ENCODE measurements at regions of chr13 and their contacts with region 1.

Region 1: DNA sequence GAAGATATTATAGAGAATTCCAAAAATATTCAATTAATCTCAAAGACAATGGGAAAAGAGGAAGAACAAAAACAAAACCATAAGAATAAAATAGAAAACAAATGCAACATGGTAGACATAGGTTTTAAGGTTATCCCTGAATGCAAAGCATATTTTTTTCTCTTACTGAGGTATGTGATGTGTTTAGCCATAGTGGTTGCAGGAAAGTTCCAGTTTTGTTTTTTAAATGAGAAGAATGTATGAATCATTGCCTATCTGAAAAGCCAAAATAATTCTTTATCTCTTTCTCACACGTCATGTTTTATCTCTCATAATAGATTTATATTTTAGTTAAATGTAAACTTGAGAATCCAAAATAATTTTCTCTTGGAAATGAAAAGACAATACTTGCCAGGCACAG is 2591.7 kb upstream of the PCDH20 start:
- DNase-seq: no peak
- ATAC-seq: no peak
- H3K4me3 ChIP-seq: no peak overlapping the region
- H3K27ac ChIP-seq: no peak overlapping the region
- H3K4me1 ChIP-seq: no peaks in the 10 kb centered on the region
- H3K27me3 ChIP-seq: no peaks in the 10 kb centered on the region
- CTCF ChIP-seq: no peak

Region 2: DNA sequence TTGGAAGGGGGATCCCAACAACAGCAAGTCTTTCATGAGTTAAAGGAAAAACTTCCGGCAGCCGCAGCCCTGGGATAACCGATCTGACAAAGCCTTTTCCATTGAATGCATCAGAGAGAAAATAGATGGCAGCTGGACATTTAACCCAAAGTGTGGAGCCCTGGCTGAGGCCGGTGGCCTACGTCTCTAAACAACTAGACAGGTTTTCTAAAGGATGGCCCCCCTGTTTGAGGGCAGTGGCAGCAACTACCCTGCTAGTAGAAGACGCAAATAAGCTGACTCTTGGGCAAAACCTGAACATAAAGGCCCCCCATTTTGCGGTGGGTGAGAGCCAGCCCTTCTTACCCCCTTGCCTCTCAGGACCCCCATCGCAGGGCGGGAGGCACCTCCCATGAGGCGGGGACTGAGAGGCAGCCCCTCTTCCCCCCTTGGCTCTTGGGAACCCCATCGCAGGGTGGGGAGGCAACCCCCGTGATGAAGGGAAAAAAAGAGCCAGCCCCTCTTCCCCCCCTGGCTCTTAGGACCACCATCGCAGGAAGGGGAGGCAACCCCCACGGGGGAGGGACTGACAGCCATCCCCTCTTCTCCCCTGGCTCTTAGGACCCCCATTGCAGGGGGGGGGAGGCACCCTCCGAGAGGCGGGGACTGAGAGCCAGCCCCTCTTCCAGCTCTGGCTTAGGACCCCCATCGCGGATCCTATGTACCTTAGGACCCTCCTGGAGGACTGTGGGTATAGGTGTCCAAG is 168.8 kb before region 1 on chr13:
- CTCF ChIA-PET with region 1: no interaction called
- POLR2A ChIA-PET with region 1: no interaction called
- in situ Hi-C with region 1: no loop called
- intact Hi-C with region 1: no loop called
- DNase-seq: no peak
- ATAC-seq: no peak
- H3K4me3 ChIP-seq: no peak overlapping the region
- H3K27ac ChIP-seq: no peak overlapping the region
- H3K4me1 ChIP-seq: no peaks in the 10 kb centered on the region
- H3K27me3 ChIP-seq: no peaks in the 10 kb centered on the region
- CTCF ChIP-seq: no peak

Region 3: GRCh38 chr13:63972328-63972727 is 35.0 kb before region 1 on chr13:
- CTCF ChIA-PET with region 1: interaction called, 12 read pairs
- POLR2A ChIA-PET with region 1: no interaction called
- in situ Hi-C with region 1: no loop called
- intact Hi-C with region 1: no loop called
- DNase-seq: no peak
- ATAC-seq: no peak
- H3K4me3 ChIP-seq: no peak overlapping the region
- H3K27ac ChIP-seq: no peak overlapping the region
- H3K4me1 ChIP-seq: no peaks in the 10 kb centered on the region
- H3K27me3 ChIP-seq: no peaks in the 10 kb centered on the region
- CTCF ChIP-seq: no peak

Region 4: DNA sequence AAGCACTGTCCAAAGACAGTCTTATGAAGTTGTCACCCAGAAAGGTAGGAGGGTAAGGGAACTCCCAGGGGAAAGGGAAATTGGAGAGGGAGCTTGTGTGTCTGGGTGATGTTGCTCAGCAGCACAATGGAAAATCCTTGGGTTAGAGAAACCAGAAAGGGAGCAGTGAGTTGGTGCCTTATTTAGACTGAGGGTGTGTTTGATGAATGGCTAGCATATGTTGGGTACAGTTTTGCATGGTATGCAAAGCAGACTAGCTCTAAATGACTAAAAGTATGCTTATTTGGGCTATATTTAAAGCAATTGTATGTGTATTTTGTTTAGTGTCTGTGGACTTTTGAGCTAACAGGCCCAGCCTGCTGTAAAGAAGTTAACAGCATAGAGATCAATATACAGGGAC is 292.9 kb after region 1 on chr13:
- CTCF ChIA-PET with region 1: no interaction called
- POLR2A ChIA-PET with region 1: no interaction called
- in situ Hi-C with region 1: no loop called
- intact Hi-C with region 1: no loop called
- DNase-seq: no peak
- ATAC-seq: no peak
- H3K4me3 ChIP-seq: no peak overlapping the region
- H3K27ac ChIP-seq: no peak overlapping the region
- H3K4me1 ChIP-seq: no peaks in the 10 kb centered on the region
- H3K27me3 ChIP-seq: no peaks in the 10 kb centered on the region
- CTCF ChIP-seq: no peak

Measured in Panc1 (cell line).